ENCODE measurements at regions of chr3 and their contacts with region 1.

Region 1: GRCh38 chr3:54783611-54784010 is 144.2 kb downstream of the LRTM1 start:
- DNase-seq: peak; percentile 28
- H3K4me3 ChIP-seq: no peak overlapping the region
- CTCF ChIP-seq: no peak

Region 2: DNA sequence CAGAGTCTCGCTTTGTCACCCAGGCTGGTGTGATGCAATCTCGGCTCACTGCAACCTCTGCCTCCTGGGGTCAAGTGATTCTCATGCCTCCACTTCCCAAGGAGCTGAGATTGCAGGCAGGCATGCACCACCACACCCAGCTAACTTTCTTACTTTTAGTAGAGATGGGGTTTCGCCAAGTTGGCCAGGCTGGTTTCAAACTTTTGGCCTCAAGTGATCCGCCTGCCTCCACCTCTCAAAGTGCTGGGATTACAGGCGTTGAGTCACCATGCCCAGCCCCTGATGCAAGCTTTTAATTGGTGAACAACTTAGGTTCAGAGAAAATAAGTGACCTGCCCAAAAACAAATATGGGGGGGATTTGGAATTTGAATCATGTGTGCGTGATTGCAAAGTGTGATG is 101.9 kb before region 1 on chr3:
- CTCF ChIA-PET with region 1: no interaction called
- POLR2A ChIA-PET with region 1: no interaction called
- DNase-seq: no peak
- H3K4me3 ChIP-seq: no peak overlapping the region
- CTCF ChIP-seq: no peak

Region 3: GRCh38 chr3:54772746-54773145 is 10.9 kb before region 1 on chr3:
- CTCF ChIA-PET with region 1: interaction called, 10 read pairs
- POLR2A ChIA-PET with region 1: interaction called, 4 read pairs
- DNase-seq: no peak
- H3K4me3 ChIP-seq: no peak overlapping the region
- CTCF ChIP-seq: no peak